Cardiac septum (tissue), 1 donor: ENCODE measurements at regions of chr12 and their contacts with region 1.

Region 1: GRCh38 chr12:2812290-2813213 is at the start of gene ITFG2:
- DNase-seq: peak; percentile 99
- total RNA-seq, gene ITFG2: 13.9 TPM

Region 2: GRCh38 chr12:2520722-2521246 is 291.8 kb before region 1 on chr12:
- intact Hi-C with region 1: no loop called
- DNase-seq: no peak

Region 3: GRCh38 chr12:2795291-2796186 is 17.0 kb before region 1 on chr12:
- intact Hi-C with region 1: loop called (anchors 1 kb)
- DNase-seq: peak; percentile 93